Mammary epithelial cell (primary cell): ENCODE measurements at regions of chr14 and their contacts with region 1.

Region 1: GRCh38 chr14:77023001-77023996 is 5.2 kb downstream of the IRF2BPL start:
- DNase-seq: peak; percentile 53
- H3K4me3 ChIP-seq: peak overlapping the region; percentile 79 to 89 (median 88)
- H3K27ac ChIP-seq: peak overlapping the region; percentile 49
- H3K4me1 ChIP-seq: peaks cover 25% of the 10 kb centered on the region
- H3K27me3 ChIP-seq: no peaks in the 10 kb centered on the region
- CTCF ChIP-seq: peak; percentile 23 to 41

Region 2: DNA sequence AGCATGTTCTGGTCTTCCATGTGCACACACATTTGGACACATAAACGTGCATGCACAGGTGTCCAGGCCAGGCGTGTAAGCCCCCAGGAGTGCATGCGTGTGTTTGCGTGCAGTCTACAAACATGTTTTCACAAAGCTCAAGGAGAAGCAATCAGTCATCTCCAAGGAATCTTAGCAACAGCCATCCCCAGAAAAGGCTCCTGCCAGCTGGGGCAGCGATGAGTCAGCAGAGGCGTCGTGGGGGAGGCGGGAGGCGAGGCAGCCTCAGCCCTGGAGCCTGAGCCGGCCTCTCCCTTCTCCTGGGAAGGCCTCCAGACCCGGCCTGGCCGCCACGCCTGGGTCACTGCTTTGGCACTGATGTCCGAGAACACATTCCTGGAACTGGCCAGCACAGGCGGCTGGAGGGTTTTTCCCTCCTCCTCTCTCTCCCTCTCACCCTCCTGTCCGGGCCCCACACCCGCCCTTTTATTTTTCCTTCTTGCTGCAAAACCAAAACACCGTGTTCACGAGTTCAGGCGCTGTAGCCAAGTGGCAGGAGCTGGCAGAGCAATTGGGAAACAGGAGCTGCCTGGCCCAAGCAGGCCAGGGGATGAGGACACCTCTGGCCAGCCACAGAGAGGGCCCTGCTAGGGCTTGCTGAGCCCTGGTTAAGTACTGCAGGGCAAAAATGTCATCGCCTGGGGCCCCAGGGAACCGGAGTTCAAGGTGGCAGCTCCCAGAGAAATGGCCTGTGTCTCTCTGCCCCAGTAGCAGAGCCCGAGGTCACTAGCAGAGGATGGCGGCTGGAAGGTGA is 104.4 kb before region 1 on chr14:
- CTCF ChIA-PET with region 1: no interaction called
- dilution Hi-C with region 1: no loop called
- in situ Hi-C with region 1: loop called in 1 of 2 experiments (anchors 5 kb)
- intact Hi-C with region 1: loop called (anchors 1 kb)
- DNase-seq: peak; percentile 96
- H3K4me3 ChIP-seq: no peak overlapping the region
- H3K27ac ChIP-seq: peak overlapping the region; percentile 88
- H3K4me1 ChIP-seq: peaks cover 44% of the 10 kb centered on the region
- H3K27me3 ChIP-seq: no peaks in the 10 kb centered on the region
- CTCF ChIP-seq: peak in 1 of 2 donors; percentile 28

Region 3: DNA sequence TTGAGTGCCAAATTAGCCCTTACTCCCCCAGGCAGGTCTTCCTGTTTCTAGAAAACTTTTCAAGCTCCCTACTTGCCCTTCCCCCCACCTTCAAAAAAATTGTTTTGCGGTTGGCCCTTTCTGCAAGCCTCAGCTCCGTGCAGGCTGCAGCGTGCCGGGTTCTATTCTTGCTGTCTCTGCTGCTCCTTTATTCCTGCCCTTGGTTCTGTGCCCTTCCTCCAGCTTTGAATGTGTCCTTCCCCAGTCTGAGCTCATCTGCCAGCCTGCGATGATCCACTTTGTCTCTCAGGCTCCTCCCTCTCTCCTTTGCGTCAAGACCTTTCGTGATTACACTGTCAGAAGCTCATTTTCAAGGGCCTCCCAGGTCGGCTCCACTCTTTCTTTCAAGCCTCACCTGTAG is 93.4 kb before region 1 on chr14:
- CTCF ChIA-PET with region 1: interaction called, 26 read pairs
- dilution Hi-C with region 1: loop called (anchors 5 kb)
- in situ Hi-C with region 1: no loop called
- intact Hi-C with region 1: no loop called
- DNase-seq: peak; percentile 59
- H3K4me3 ChIP-seq: no peak overlapping the region
- H3K27ac ChIP-seq: no peak overlapping the region
- H3K4me1 ChIP-seq: peaks cover 16% of the 10 kb centered on the region
- H3K27me3 ChIP-seq: no peaks in the 10 kb centered on the region
- CTCF ChIP-seq: no peak

Region 4: DNA sequence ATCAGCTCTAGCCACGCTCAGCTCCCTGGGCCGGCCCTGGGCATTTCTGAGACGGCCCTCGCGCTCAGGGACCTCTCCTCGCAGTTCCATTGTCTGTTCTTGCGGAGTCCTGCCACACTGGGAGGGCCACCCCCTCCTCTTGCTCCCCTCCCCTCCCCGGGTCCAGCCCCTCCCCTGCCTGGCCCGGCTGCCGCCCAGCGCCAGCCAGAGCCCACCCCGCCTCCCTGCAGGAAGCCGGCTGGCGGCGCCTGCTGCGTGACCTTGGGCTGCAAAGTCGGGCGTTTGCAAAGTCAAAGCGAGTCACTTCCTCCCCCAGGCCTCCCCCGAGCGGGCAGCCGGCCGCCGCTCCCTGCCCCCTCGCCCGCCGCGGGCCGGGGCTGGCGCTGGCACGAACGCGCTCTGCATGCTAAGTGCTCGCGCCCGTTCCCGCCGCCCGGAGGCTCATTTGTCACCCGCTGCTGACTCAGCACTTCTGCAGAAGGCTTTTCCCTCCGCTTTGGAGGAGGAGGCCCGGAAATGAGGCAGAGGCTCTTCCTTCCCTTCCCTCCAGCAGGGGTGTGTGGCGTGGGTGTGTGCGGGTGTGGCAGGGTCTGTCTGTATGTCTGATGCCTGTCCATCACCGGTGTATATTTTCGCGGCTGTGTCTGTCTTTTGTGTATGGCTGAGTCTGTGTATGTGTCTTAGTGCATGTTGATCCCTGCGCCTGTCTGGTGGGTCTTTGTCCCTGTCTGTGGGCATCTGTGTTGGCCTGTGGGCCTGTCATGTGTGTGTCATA is 66.8 kb before region 1 on chr14:
- CTCF ChIA-PET with region 1: no interaction called
- dilution Hi-C with region 1: no loop called
- in situ Hi-C with region 1: loop called in 1 of 2 experiments (anchors 5 kb)
- intact Hi-C with region 1: loop called (anchors 2 kb)
- DNase-seq: peak; percentile 93
- H3K4me3 ChIP-seq: peak overlapping the region in 1 of 3 experiments; percentile 25
- H3K27ac ChIP-seq: peak overlapping the region; percentile 74
- H3K4me1 ChIP-seq: peaks cover 72% of the 10 kb centered on the region
- H3K27me3 ChIP-seq: no peaks in the 10 kb centered on the region
- CTCF ChIP-seq: peak in 1 of 2 donors; percentile 14

Region 5: DNA sequence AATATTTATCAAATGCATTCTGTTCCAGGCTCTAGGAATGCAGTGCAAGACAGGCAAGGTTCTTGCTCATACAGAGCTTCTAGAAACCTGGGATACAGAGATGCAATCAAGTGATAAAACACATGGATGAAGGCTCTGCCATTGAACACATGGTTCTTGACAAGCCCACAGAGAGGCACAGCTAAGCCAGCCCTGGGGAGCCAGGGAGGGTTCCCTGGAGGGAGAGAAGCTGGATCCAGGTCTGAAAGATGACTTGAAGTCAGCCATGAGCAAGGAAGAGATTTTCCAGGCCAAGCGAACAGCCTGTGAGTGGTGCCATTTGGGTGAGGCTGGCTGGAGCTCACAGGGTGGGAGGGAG is 61.0 kb before region 1 on chr14:
- CTCF ChIA-PET with region 1: no interaction called
- dilution Hi-C with region 1: no loop called
- in situ Hi-C with region 1: loop called in 1 of 2 experiments (anchors 5 kb)
- intact Hi-C with region 1: loop called (anchors 2 kb)
- DNase-seq: no peak
- H3K4me3 ChIP-seq: peak overlapping the region; percentile 7 to 43 (median 24)
- H3K27ac ChIP-seq: peak overlapping the region; percentile 49
- H3K4me1 ChIP-seq: peaks cover 54% of the 10 kb centered on the region
- H3K27me3 ChIP-seq: no peaks in the 10 kb centered on the region
- CTCF ChIP-seq: no peak

Region 6: GRCh38 chr14:77007975-77008421 is 15.3 kb before region 1 on chr14:
- CTCF ChIA-PET with region 1: interaction called, 4 read pairs
- dilution Hi-C with region 1: no loop called
- in situ Hi-C with region 1: no loop called
- intact Hi-C with region 1: loop called (anchors 2 kb)
- DNase-seq: peak; percentile 68
- H3K4me3 ChIP-seq: no peak overlapping the region
- H3K27ac ChIP-seq: peak overlapping the region; percentile 80
- H3K4me1 ChIP-seq: peaks cover 48% of the 10 kb centered on the region
- H3K27me3 ChIP-seq: no peaks in the 10 kb centered on the region
- CTCF ChIP-seq: no peak

Region 7: GRCh38 chr14:77097700-77098528 is 74.6 kb after region 1 on chr14 and contains the start of gene CIPC:
- CTCF ChIA-PET with region 1: no interaction called
- dilution Hi-C with region 1: loop called (anchors 5 kb)
- in situ Hi-C with region 1: no loop called
- intact Hi-C with region 1: no loop called
- DNase-seq: peak; percentile 99
- H3K4me3 ChIP-seq: peak within 1 kb of the TSS; percentile 84 to 96 (median 91)
- H3K27ac ChIP-seq: peak within 1 kb of the TSS; percentile 93
- H3K4me1 ChIP-seq: peaks cover 18% of the 10 kb centered on the region
- H3K27me3 ChIP-seq: no peaks in the 10 kb centered on the region
- CTCF ChIP-seq: no peak
- total RNA-seq, gene CIPC: 11.6 to 30.2 TPM

Region 8: GRCh38 chr14:77212943-77213678 is 189.8 kb after region 1 on chr14:
- CTCF ChIA-PET with region 1: no interaction called
- dilution Hi-C with region 1: no loop called
- in situ Hi-C with region 1: no loop called
- intact Hi-C with region 1: no loop called
- DNase-seq: peak; percentile 60
- H3K4me3 ChIP-seq: no peak overlapping the region
- H3K27ac ChIP-seq: no peak overlapping the region
- H3K4me1 ChIP-seq: no peaks in the 10 kb centered on the region
- H3K27me3 ChIP-seq: peaks cover 3% of the 10 kb centered on the region
- CTCF ChIP-seq: peak; percentile 81 to 97